Activated CD4-positive, alpha-beta T cell treated with anti-CD3 and anti-CD28 coated beads, Interleukin-2, amount 10 ng/mL, durations not matched to agents 7 days and 5 days (primary cell): ENCODE measurements at regions of chr1 and their contacts with region 1.

Region 1: GRCh38 chr1:17582124-17582774 is 42.8 kb downstream of the ARHGEF10L start:
- DNase-seq: no peak
- H3K4me3 Mint-ChIP-seq: no peak overlapping the region
- H3K27ac Mint-ChIP-seq: no peak overlapping the region
- H3K4me1 Mint-ChIP-seq: peaks cover 7% of the 10 kb centered on the region
- H3K27me3 Mint-ChIP-seq: no peaks in the 10 kb centered on the region

Region 2: DNA sequence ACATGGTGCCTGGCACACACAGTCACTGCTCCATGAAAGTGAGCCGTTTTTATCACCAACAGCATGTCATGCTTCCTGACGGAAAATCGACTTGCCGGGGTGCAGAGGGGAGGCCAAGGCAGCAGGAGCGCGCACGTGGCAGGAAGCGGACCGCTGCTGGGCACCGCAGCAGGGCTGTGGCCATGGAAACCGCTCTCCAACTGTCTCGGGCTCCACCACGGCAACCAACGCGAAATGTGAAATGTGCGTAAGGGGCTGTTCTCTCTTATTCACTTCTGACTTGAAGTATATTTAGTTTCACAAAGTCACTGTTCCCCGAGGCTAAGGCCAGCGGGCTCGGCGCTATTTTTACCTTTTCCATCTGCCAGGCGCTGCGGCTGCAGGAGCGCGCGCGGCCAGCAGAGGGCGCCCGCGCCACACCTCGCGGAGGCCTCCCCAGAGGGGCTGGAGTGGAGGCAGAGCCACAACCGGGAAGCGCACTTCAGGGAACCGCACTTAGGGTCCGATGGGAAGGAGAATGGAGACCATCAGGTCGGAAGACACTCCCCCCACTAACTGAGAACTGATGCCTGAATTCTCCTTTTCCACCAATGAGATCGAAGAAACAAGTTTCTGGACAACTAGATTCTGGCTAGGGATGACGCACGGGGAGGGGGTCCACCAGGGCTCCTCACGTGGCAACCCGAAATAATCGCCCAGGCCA is 162.5 kb before region 1 on chr1:
- CTCF ChIA-PET with region 1: no interaction called
- POLR2A ChIA-PET with region 1: no interaction called
- DNase-seq: peak; percentile 59
- H3K4me3 Mint-ChIP-seq: no peak overlapping the region
- H3K27ac Mint-ChIP-seq: no peak overlapping the region
- H3K4me1 Mint-ChIP-seq: peaks cover 8% of the 10 kb centered on the region
- H3K27me3 Mint-ChIP-seq: no peaks in the 10 kb centered on the region

Region 3: DNA sequence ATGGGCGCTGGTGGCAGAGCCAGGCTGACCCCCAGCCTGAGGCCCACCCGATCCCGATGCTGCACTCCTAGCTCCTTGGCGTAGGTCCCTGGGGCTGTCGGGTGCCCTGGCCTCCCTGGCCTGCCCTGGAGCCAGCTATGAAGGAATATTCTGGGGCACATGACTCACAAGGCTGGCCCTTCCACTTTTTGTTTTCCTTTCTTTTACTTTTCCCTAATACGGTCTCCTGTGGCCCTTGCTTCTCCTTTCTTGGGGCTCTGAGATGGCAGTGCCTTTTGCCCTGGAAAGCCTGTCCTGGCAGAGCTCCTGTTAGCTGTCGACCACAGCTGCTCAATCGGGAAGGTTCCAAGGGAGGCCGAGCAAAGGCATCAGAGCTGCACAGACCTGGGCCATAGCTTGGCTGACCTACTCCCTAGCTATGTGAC is 20.7 kb before region 1 on chr1:
- CTCF ChIA-PET with region 1: no interaction called
- POLR2A ChIA-PET with region 1: interaction called, 11 read pairs
- DNase-seq: no peak
- H3K4me3 Mint-ChIP-seq: no peak overlapping the region
- H3K27ac Mint-ChIP-seq: no peak overlapping the region
- H3K4me1 Mint-ChIP-seq: no peaks in the 10 kb centered on the region
- H3K27me3 Mint-ChIP-seq: no peaks in the 10 kb centered on the region